Prostate gland (tissue), 2 donors: ENCODE measurements at regions of chr2 and their contacts with region 1.

Region 1: GRCh38 chr2:88055371-88056128 is at the start of gene KRCC1:
- DNase-seq: peak; percentile 94
- H3K4me3 ChIP-seq: peak within 1 kb of the TSS; percentile 77 to 96
- H3K27ac ChIP-seq: peak within 1 kb of the TSS; percentile 93 to 97
- H3K4me1 ChIP-seq: no peaks in the 10 kb centered on the region
- H3K27me3 ChIP-seq: no peaks in the 10 kb centered on the region
- CTCF ChIP-seq: peak in 2 of 4 experiments; percentile 48 to 55
- POLR2A ChIP-seq: peak; percentile 97
- total RNA-seq, gene KRCC1: 18.7 to 36.6 TPM

Region 2: DNA sequence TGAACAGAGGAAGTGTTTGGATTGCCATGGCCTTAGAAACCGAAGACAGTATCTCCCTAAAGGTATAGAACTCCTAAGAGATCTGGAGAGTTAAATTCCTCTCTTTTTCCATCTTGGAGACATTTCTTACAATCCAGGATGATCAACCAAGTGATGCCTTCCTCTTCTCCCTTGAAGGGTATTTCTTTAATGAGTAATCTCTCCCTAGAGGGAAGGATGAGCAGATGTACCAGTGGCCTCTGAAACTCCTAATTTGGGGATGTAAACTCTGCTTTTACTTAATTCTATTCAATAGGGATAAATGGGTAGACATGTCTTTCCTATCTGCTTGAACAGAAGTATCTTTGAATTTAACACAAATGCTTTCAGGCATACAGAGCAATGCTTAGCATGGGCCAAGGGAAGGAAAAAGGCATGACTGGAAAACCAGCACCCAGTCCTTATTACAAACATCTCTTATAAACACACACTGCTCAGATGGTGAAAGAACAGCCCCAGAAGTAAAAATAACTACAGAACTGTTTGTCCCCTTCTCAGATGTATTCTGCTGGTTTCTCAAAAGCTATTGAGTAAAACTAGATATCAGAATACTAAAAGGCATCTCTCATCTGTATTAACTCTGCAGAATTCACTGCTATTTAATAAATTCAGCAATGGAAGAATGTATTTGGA is 109.9 kb after region 1 on chr2:
- intact Hi-C with region 1: loop called (anchors 5 kb)
- DNase-seq: no peak
- H3K4me3 ChIP-seq: no peak overlapping the region
- H3K27ac ChIP-seq: peak overlapping the region in 1 of 2 donors; percentile 20
- H3K4me1 ChIP-seq: no peaks in the 10 kb centered on the region
- H3K27me3 ChIP-seq: no peaks in the 10 kb centered on the region
- CTCF ChIP-seq: no peak
- POLR2A ChIP-seq: no peak

Region 3: GRCh38 chr2:88187038-88187676 is 131.6 kb after region 1 on chr2:
- intact Hi-C with region 1: loop called (anchors 5 kb)
- DNase-seq: peak; percentile 34
- H3K4me3 ChIP-seq: no peak overlapping the region
- H3K27ac ChIP-seq: no peak overlapping the region
- H3K4me1 ChIP-seq: no peaks in the 10 kb centered on the region
- H3K27me3 ChIP-seq: no peaks in the 10 kb centered on the region
- CTCF ChIP-seq: peak in 2 of 4 experiments; percentile 23 to 56
- POLR2A ChIP-seq: no peak

Region 4: DNA sequence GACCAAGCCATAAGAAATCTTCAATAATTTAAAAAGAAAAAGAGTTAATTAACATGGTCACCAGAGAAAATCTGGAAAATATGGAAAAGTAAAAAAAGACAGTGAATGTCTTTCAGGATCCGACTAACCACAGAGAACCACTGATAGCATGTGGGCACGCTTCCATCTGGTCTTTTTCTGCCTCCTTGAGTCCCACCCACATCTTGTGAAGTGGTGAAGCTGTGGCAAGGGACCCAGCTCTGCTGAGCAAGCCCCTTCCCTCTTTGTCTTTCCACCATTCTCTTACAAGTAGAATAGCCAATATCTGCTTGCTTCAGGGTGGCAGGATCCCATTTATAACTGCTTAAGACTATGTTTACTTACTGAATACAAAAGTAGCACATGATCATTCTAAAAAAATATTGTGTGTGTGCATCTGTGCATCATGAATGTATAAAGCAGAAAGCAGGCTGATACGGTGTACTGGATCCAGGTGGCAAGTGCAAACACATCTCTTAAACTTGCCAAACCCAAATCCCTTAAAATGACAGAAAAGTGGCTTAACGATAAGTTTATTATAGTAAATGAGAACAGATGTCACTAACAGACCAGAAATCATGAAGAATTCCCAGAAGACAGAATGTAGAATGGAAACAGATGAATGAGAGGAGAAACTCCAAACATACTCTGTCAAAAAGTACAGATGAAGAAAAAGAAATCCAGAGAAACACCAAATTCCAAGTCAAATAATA is 344.7 kb after region 1 on chr2:
- intact Hi-C with region 1: no loop called
- DNase-seq: no peak
- H3K4me3 ChIP-seq: no peak overlapping the region
- H3K27ac ChIP-seq: no peak overlapping the region
- H3K4me1 ChIP-seq: no peaks in the 10 kb centered on the region
- H3K27me3 ChIP-seq: no peaks in the 10 kb centered on the region
- CTCF ChIP-seq: no peak
- POLR2A ChIP-seq: no peak

Region 5: DNA sequence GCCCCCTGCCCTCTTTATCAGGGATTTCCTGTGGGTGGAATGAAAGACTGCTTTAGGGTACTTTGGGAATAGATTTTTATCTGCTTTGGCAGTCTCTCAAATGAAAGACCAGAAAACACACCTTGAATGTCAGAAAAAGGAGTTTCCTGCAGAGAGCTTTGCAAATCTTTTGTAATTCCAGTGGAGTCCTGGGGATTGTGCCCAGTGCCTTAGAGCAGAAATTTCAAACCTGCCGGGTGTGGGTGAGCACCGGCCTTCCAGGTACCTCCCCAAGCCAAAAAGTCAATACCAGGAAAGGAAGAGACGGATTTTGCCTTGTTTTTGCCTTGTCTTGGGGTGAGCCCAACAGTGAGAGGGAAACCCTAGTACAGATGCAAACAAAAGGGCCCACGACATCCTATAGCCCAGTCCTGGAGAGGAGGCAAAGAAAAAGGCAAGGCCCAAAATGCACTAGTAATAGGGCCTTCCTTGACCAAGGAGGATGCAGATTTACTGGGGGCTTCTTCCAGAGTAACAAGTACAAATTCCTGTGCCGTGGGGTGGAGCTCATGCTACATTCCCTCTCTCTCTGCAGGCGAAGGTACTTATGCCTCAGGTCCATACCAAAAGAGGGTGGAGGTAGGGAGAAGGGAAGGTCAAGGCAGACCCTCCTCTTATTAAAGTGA is 360.6 kb after region 1 on chr2:
- intact Hi-C with region 1: no loop called
- DNase-seq: no peak
- H3K4me3 ChIP-seq: no peak overlapping the region
- H3K27ac ChIP-seq: no peak overlapping the region
- H3K4me1 ChIP-seq: no peaks in the 10 kb centered on the region
- H3K27me3 ChIP-seq: no peaks in the 10 kb centered on the region
- CTCF ChIP-seq: no peak
- POLR2A ChIP-seq: no peak